Aorta (tissue), 5 donors: ENCODE measurements at regions of chr1 and their contacts with region 1.

Region 1: DNA sequence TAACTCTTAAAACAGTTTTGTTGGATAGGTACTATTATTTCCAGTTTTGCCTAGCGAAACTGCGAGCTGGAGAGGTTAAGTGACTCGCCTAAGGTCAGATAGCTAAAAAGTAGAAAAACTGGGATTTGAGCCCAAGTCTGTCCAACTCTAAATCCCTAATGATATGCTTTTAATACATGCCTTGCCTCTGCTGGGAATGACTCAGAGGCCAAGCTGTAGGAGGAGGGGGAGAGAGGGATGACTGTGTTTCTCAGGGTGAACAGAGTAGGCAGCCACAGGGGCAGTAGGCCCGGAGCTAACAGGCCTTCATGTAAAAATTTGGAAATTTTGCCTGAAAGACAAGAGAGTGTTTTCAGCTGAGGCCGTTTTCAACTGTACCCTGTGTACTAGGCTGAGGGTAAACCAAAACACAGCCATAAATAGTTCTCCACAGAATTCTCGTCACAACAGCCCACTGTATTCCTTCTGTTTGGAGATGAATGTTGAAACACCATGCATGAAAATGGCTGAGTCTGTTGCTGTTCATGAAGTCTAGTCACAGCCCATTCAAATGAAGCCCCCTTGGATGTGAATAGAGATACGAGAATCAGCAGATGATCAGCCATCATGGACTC is 107.5 kb upstream of the HOOK1 start:
- DNase-seq: peak; percentile 77
- ATAC-seq: peak; percentile 82
- H3K4me3 ChIP-seq: no peak overlapping the region
- H3K27ac ChIP-seq: peak overlapping the region in 1 of 2 donors; percentile 78
- H3K4me1 ChIP-seq: peaks cover 5 to 20% of the 10 kb centered on the region in 2 donors
- H3K27me3 ChIP-seq: no peaks in the 10 kb centered on the region

Region 2: GRCh38 chr1:58883037-58883887 is 824.0 kb before region 1 on chr1:
- intact Hi-C with region 1: loop called in 1 of 2 experiments (anchors 10 kb)
- DNase-seq: peak; percentile 85
- ATAC-seq: peak; percentile 44
- H3K4me3 ChIP-seq: no peak overlapping the region
- H3K27ac ChIP-seq: peak overlapping the region in 1 of 2 donors; percentile 5
- H3K4me1 ChIP-seq: peaks cover 2 to 4% of the 10 kb centered on the region in 2 donors
- H3K27me3 ChIP-seq: no peaks in the 10 kb centered on the region

Region 3: GRCh38 chr1:59150577-59151391 is 556.5 kb before region 1 on chr1:
- intact Hi-C with region 1: loop called (anchors 10 kb)
- DNase-seq: peak; percentile 86 to 88
- ATAC-seq: peak; percentile 83
- H3K4me3 ChIP-seq: peak overlapping the region in 1 of 2 donors; percentile 11
- H3K27ac ChIP-seq: peak overlapping the region; percentile 17 to 99
- H3K4me1 ChIP-seq: peaks cover 7 to 9% of the 10 kb centered on the region in 2 donors
- H3K27me3 ChIP-seq: no peaks in the 10 kb centered on the region